SK-N-SH (cell line): ENCODE measurements at regions of chr2 and their contacts with region 1.

Region 1: GRCh38 chr2:20650880-20651730 is at the start of gene HS1BP3:
- DNase-seq: peak; percentile 100
- H3K4me3 ChIP-seq: peak within 1 kb of the TSS; percentile 76 to 93
- H3K27ac ChIP-seq: peak within 1 kb of the TSS; percentile 48 to 91
- H3K4me1 ChIP-seq: peaks cover 13 to 18% of the 10 kb centered on the region in 2 experiments; a peak in 2 of 4 replicates
- H3K27me3 ChIP-seq: peaks cover 9% of the 10 kb centered on the region; the same call in 1 of the 2 replicates
- CTCF ChIP-seq: peak; percentile 66
- EP300 ChIP-seq: 0 out of 4 replicates have a peak, but pooled peaks of 1 of the 2 experiments have one; percentile 23
- RAD21 ChIP-seq: peak; percentile 59
- polyA plus RNA-seq, gene HS1BP3: 18.7 and 20.1 TPM in 2 replicates

Region 2: GRCh38 chr2:20378792-20379519 is 272.1 kb before region 1 on chr2:
- CTCF ChIA-PET with region 1: interaction called, 54 read pairs
- POLR2A ChIA-PET with region 1: no interaction called
- DNase-seq: peak; percentile 93
- H3K4me3 ChIP-seq: no peak overlapping the region
- H3K27ac ChIP-seq: peak overlapping the region in 1 of 2 experiments; percentile 11; a peak in 1 of 4 replicates
- H3K4me1 ChIP-seq: peaks cover 0 to 16% of the 10 kb centered on the region in 2 experiments; a peak in 1 of 4 replicates
- H3K27me3 ChIP-seq: no peaks in the 10 kb centered on the region; the same call in 1 of the 2 replicates
- CTCF ChIP-seq: peak; percentile 97
- EP300 ChIP-seq: no peak
- RAD21 ChIP-seq: peak; percentile 95

Region 3: DNA sequence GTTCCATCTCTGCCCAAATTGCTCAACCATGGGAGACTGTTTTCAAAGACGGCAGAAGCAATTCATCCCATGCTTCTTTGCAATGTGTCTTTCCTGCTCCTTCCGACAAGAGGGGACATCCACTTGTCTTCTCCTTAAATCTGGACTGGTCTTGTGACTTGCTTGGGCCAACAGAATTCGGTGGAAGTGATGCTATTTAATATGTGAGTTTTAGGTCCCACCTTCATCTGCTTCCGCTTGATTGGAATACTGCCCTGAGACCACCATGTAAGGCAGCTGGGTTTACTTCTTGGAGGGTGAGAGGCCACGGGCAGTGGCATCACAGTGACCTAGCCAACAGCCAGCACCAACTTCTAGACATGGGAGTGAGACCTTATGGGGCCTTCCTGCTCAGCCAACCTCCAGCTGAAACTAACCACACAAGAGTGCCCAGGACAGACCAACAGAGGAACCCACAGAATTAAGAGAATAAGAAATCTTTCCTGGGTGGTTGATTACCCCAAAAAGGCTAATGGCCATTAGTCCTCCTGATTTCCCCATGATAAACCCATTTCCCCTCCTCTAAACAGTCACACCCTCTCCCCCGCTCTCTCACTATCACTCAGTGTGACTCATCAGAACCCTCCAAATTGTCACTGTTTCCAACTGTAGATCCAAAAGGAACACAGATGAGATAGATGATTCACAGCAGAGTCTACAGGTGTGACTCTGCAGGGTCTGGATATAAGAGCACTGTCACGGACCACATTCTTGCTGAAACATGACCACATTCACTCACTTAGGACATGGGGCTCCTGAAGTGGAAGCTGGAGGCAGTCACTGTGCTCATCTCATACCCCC is 220.4 kb before region 1 on chr2:
- CTCF ChIA-PET with region 1: interaction called, 64 read pairs
- POLR2A ChIA-PET with region 1: no interaction called
- DNase-seq: no peak
- H3K4me3 ChIP-seq: no peak overlapping the region
- H3K27ac ChIP-seq: no peak overlapping the region
- H3K4me1 ChIP-seq: peaks cover 2 to 3% of the 10 kb centered on the region in 2 experiments; a peak in 3 of 4 replicates
- H3K27me3 ChIP-seq: peaks cover 15% of the 10 kb centered on the region; the same call in 1 of the 2 replicates
- CTCF ChIP-seq: no peak
- EP300 ChIP-seq: no peak
- RAD21 ChIP-seq: no peak

Region 4: GRCh38 chr2:20483194-20483895 is 167.8 kb before region 1 on chr2:
- CTCF ChIA-PET with region 1: no interaction called
- POLR2A ChIA-PET with region 1: no interaction called
- DNase-seq: no peak
- H3K4me3 ChIP-seq: no peak overlapping the region
- H3K27ac ChIP-seq: no peak overlapping the region
- H3K4me1 ChIP-seq: peaks cover 0 to 29% of the 10 kb centered on the region in 2 experiments; a peak in 2 of 4 replicates
- H3K27me3 ChIP-seq: no peaks in the 10 kb centered on the region
- CTCF ChIP-seq: no peak
- EP300 ChIP-seq: no peak
- RAD21 ChIP-seq: no peak

Region 5: GRCh38 chr2:20617892-20618467 is 33.1 kb before region 1 on chr2:
- CTCF ChIA-PET with region 1: interaction called, 11 read pairs
- POLR2A ChIA-PET with region 1: no interaction called
- DNase-seq: peak; percentile 82
- H3K4me3 ChIP-seq: no peak overlapping the region
- H3K27ac ChIP-seq: peak overlapping the region; percentile 67 to 90
- H3K4me1 ChIP-seq: peaks cover 18 to 42% of the 10 kb centered on the region in 2 experiments; a peak in 3 of 4 replicates
- H3K27me3 ChIP-seq: no peaks in the 10 kb centered on the region
- CTCF ChIP-seq: peak; percentile 56
- EP300 ChIP-seq: no peak; a peak in 1 of 4 replicates
- RAD21 ChIP-seq: peak; percentile 23; the same call in 1 of the 2 replicates

Region 6: GRCh38 chr2:20666304-20667150 is 15.4 kb after region 1 on chr2 and contains the start of gene GDF7:
- CTCF ChIA-PET with region 1: interaction called, 137 read pairs
- POLR2A ChIA-PET with region 1: interaction called, 5 read pairs
- DNase-seq: peak; percentile 93
- H3K4me3 ChIP-seq: peak within 1 kb of the TSS; percentile 37 to 58
- H3K27ac ChIP-seq: no peak within 1 kb of the TSS
- H3K4me1 ChIP-seq: peaks cover 0 to 26% of the 10 kb centered on the region in 2 experiments; a peak in 2 of 4 replicates
- H3K27me3 ChIP-seq: peaks cover 91% of the 10 kb centered on the region
- CTCF ChIP-seq: peak; percentile 46
- EP300 ChIP-seq: no peak
- RAD21 ChIP-seq: no peak
- polyA plus RNA-seq, gene GDF7: 0.02 and 0.03 TPM in 2 replicates

Region 7: GRCh38 chr2:20829861-20830260 is 178.8 kb after region 1 on chr2:
- CTCF ChIA-PET with region 1: no interaction called
- POLR2A ChIA-PET with region 1: no interaction called
- DNase-seq: no peak
- H3K4me3 ChIP-seq: no peak overlapping the region
- H3K27ac ChIP-seq: no peak overlapping the region
- H3K4me1 ChIP-seq: no peaks in the 10 kb centered on the region
- H3K27me3 ChIP-seq: no peaks in the 10 kb centered on the region; the same call in 1 of the 2 replicates
- CTCF ChIP-seq: no peak
- EP300 ChIP-seq: no peak
- RAD21 ChIP-seq: no peak

Region 8: GRCh38 chr2:20953145-20953824 is 302.2 kb after region 1 on chr2:
- CTCF ChIA-PET with region 1: interaction called, 17 read pairs
- POLR2A ChIA-PET with region 1: no interaction called
- DNase-seq: no peak
- H3K4me3 ChIP-seq: no peak overlapping the region
- H3K27ac ChIP-seq: no peak overlapping the region
- H3K4me1 ChIP-seq: peaks cover 0 to 3% of the 10 kb centered on the region in 2 experiments; a peak in 1 of 4 replicates
- H3K27me3 ChIP-seq: no peaks in the 10 kb centered on the region
- CTCF ChIP-seq: no peak
- EP300 ChIP-seq: no peak
- RAD21 ChIP-seq: no peak